Heart right ventricle (tissue), 16 donors: ENCODE measurements at regions of chr11 and their contacts with region 1.

Region 1: GRCh38 chr11:60874421-60875365 is 7.4 kb downstream of the ZP1 start:
- DNase-seq: no peak
- ATAC-seq: no peak
- H3K4me3 ChIP-seq: no peak overlapping the region
- H3K27ac ChIP-seq: no peak overlapping the region
- H3K4me1 ChIP-seq: peaks cover 3 to 73% (median 44%) of the 10 kb centered on the region in 9 donors
- H3K27me3 ChIP-seq: no peaks in the 10 kb centered on the region
- CTCF ChIP-seq: no peak

Region 2: DNA sequence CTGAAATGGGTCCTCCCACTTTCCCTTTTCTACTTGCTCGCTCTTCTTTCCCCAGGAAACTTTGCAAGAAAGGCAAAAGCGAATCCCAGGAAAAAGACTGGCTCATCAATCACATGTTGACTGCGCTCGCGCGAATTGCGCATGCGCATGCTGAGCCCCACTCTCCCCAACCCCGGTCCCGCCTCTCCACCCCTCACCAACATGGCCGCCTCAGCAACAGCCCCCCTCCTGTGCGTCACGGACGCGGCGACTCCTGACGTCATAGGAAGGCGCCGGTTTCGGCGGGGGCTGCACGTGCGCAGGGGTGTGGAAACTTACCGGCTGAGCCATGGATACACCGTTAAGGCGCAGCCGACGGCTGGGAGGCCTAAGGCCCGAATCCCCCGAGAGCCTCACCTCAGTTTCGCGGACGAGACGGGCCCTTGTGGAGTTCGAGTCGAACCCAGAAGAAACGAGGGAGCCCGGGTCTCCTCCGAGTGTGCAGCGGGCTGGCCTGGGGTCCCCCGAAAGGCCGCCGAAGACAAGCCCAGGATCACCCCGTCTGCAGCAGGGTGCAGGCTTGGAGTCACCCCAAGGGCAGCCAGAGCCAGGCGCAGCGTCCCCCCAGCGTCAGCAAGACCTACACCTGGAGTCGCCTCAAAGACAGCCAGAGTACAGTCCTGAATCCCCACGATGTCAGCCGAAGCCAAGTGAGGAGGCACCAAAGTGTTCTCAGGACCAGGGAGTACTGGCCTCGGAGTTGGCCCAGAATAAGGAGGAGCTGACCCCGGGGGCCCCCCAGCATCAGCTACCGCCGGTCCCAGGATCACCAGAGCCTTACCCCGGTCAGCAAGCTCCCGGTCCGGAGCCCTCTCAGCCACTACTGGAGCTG is 32.7 kb before region 1 on chr11 and contains the start of gene CCDC86:
- intact Hi-C with region 1: loop called in 3 of 10 experiments (anchors 5 kb)
- DNase-seq: peak; percentile 97
- ATAC-seq: peak; percentile 96 to 98 (median 98)
- H3K4me3 ChIP-seq: peak within 1 kb of the TSS; percentile 62 to 96 (median 84)
- H3K27ac ChIP-seq: peak within 1 kb of the TSS; percentile 56 to 88 (median 80)
- H3K4me1 ChIP-seq: peaks cover 23 to 51% (median 38%) of the 10 kb centered on the region in 9 donors
- H3K27me3 ChIP-seq: no peaks in the 10 kb centered on the region
- CTCF ChIP-seq: no peak
- total RNA-seq, gene CCDC86: 6.6 to 20.1 (median 9.2) TPM